PC-3 (cell line): ENCODE measurements at regions of chr4 and their contacts with region 1.

Region 1: DNA sequence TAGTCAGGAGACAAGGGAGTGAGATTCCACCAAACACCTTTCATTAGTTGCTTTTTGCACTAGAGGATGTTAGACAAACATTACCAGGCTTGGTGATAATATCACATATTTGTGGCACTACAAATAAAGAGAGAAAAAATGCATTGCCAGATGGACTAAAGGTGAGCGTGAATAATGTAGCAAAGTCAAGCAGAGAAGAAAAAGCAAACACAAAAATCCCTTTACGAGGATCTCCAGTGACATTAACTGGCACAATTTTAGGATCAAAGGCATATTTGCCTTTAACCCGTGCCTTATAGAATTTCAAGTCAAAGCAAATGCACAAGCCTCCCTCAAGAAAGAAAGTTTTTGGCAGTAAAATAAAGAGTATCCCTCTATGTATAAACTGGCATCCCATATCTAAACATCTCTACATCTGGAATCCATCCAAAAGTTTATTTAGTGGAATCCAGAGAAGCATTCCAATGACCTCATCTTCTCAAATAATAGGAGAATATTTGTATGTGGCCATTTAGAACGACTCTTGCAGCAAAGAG is 290.8 kb downstream of the KCTD8 start:
- DNase-seq: peak; percentile 84
- ATAC-seq: peak; percentile 80
- H3K4me3 ChIP-seq: no peak overlapping the region
- H3K27ac ChIP-seq: no peak overlapping the region
- H3K4me1 ChIP-seq: peaks cover 26% of the 10 kb centered on the region
- H3K27me3 ChIP-seq: no peaks in the 10 kb centered on the region
- CTCF ChIP-seq: no peak

Region 2: DNA sequence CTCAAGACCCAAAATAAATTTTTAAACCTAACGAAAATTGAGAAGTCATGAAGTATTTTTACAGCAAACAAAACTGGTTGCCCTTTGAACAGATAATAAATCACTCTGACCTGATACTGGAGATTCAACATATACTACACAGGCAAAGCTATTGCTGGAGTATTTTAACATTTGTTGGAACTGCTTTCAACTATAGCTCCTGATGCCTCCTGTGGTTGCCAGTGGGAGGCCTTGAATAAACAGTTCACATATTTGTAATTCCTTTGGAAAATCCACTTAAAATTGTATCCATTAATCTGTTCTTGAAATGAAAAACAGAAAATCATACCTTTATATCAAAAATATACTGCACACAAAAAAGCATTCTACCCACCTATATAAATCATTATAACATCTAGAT is 314.3 kb before region 1 on chr4:
- CTCF ChIA-PET with region 1: no interaction called
- POLR2A ChIA-PET with region 1: no interaction called
- intact Hi-C with region 1: loop called (anchors 10 kb)
- DNase-seq: peak; percentile 54
- ATAC-seq: peak; percentile 77
- H3K4me3 ChIP-seq: no peak overlapping the region
- H3K27ac ChIP-seq: no peak overlapping the region; the same call in 1 of the 2 replicates
- H3K4me1 ChIP-seq: peaks cover 21% of the 10 kb centered on the region
- H3K27me3 ChIP-seq: no peaks in the 10 kb centered on the region
- CTCF ChIP-seq: peak; percentile 54

Region 3: GRCh38 chr4:43932448-43932847 is 225.3 kb before region 1 on chr4:
- CTCF ChIA-PET with region 1: no interaction called
- POLR2A ChIA-PET with region 1: no interaction called
- intact Hi-C with region 1: loop called (anchors 10 kb)
- DNase-seq: no peak
- ATAC-seq: no peak
- H3K4me3 ChIP-seq: no peak overlapping the region
- H3K27ac ChIP-seq: no peak overlapping the region
- H3K4me1 ChIP-seq: no peaks in the 10 kb centered on the region
- H3K27me3 ChIP-seq: no peaks in the 10 kb centered on the region
- CTCF ChIP-seq: no peak

Region 4: DNA sequence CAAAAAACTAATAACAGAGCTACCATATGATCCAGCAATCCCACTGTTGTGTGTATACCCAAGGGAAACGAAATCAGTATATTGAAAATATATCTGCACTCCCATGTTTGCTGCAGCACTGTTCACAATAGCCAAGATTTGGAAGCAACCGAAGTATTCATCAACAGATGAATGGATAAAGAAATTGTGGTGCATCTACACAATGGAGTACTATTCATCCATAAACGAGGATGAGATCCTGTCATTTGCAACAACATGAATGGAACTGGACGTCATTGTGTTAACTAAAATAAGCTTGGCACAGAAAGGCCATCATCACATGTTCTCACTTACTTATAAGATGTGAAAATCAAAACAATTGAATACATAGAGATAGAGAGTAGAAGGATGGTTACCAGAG is 111.3 kb before region 1 on chr4:
- CTCF ChIA-PET with region 1: no interaction called
- POLR2A ChIA-PET with region 1: no interaction called
- intact Hi-C with region 1: no loop called
- DNase-seq: no peak
- ATAC-seq: no peak
- H3K4me3 ChIP-seq: no peak overlapping the region
- H3K27ac ChIP-seq: no peak overlapping the region
- H3K4me1 ChIP-seq: no peaks in the 10 kb centered on the region
- H3K27me3 ChIP-seq: no peaks in the 10 kb centered on the region
- CTCF ChIP-seq: no peak

Region 5: GRCh38 chr4:44194365-44194764 is 36.6 kb after region 1 on chr4:
- CTCF ChIA-PET with region 1: no interaction called
- POLR2A ChIA-PET with region 1: no interaction called
- intact Hi-C with region 1: no loop called
- DNase-seq: peak; percentile 10
- ATAC-seq: no peak
- H3K4me3 ChIP-seq: no peak overlapping the region
- H3K27ac ChIP-seq: no peak overlapping the region
- H3K4me1 ChIP-seq: no peaks in the 10 kb centered on the region
- H3K27me3 ChIP-seq: no peaks in the 10 kb centered on the region
- CTCF ChIP-seq: no peak

Region 6: GRCh38 chr4:44638091-44638490 is 480.3 kb after region 1 on chr4:
- CTCF ChIA-PET with region 1: no interaction called
- POLR2A ChIA-PET with region 1: no interaction called
- intact Hi-C with region 1: no loop called
- DNase-seq: peak; percentile 45
- ATAC-seq: no peak
- H3K4me3 ChIP-seq: no peak overlapping the region
- H3K27ac ChIP-seq: no peak overlapping the region
- H3K4me1 ChIP-seq: no peaks in the 10 kb centered on the region
- H3K27me3 ChIP-seq: no peaks in the 10 kb centered on the region
- CTCF ChIP-seq: no peak